Caco-2 (cell line): ENCODE measurements at regions of chr15 and their contacts with region 1.

Region 1: GRCh38 chr15:81780966-81781365 is 264.9 kb downstream of the MEX3B start:
- DNase-seq: no peak
- H3K4me3 ChIP-seq: no peak overlapping the region
- H3K4me3 Mint-ChIP-seq: no peak overlapping the region
- H3K27ac Mint-ChIP-seq: no peak overlapping the region
- H3K4me1 ChIP-seq: no peaks in the 10 kb centered on the region
- H3K4me1 Mint-ChIP-seq: no peaks in the 10 kb centered on the region
- H3K27me3 ChIP-seq: no peaks in the 10 kb centered on the region
- H3K27me3 Mint-ChIP-seq: peaks cover 6% of the 10 kb centered on the region
- CTCF ChIP-seq: no peak

Region 2: DNA sequence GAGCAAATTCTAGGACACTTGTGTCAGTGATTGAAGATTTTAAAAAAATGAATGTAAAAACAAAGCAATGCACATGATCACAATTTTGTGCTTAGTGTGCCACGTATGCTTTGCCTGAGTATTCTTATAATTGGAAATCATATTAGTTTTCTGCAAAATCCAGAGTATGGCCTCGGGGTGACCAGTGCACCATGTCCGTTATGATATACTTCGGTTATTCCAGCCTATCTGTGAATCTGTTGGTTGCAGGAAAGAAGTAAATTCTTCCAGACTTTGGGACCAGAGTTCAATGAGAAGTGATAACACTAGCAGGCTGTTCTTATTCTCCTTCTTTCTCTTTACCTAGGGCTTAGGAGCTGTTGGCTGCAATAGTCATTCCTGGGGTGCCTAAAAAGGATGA is 254.9 kb before region 1 on chr15:
- CTCF ChIA-PET with region 1: no interaction called
- POLR2A ChIA-PET with region 1: interaction called, 11 read pairs
- intact Hi-C with region 1: no loop called
- DNase-seq: no peak
- H3K4me3 ChIP-seq: no peak overlapping the region
- H3K4me3 Mint-ChIP-seq: no peak overlapping the region
- H3K27ac Mint-ChIP-seq: no peak overlapping the region
- H3K4me1 ChIP-seq: no peaks in the 10 kb centered on the region
- H3K4me1 Mint-ChIP-seq: no peaks in the 10 kb centered on the region
- H3K27me3 ChIP-seq: no peaks in the 10 kb centered on the region; the same call in 1 of the 2 replicates
- H3K27me3 Mint-ChIP-seq: peaks cover 12% of the 10 kb centered on the region
- CTCF ChIP-seq: no peak